ENCODE measurements at regions of chr1 and their contacts with region 1.

Region 1: DNA sequence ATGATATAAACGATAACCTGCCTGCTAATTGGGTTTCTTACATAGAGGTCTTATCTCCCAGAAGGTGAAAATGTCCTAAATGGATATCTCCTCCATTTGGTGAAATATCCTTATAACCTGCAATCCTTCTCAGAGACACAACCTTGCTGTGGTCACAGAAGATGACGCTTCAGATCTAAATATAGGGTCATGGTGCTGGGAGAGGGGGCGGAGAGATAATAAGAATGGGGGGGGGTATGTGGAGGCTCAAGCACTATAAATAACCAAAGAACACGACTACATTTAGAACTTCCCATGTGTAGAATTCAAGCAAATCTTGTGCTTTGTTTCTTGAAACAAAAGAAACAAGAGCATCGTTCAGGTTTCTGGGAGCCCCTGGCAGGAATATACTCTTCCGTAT is 260.6 kb upstream of the ESRRG start:
- DNase-seq: no peak
- ATAC-seq: no peak
- H3K4me3 ChIP-seq: no peak overlapping the region
- H3K27ac ChIP-seq: no peak overlapping the region
- H3K4me1 ChIP-seq: no peaks in the 10 kb centered on the region
- H3K27me3 ChIP-seq: no peaks in the 10 kb centered on the region
- CTCF ChIP-seq: no peak
- POLR2A ChIP-seq: no peak
- RAD21 ChIP-seq: no peak

Region 2: DNA sequence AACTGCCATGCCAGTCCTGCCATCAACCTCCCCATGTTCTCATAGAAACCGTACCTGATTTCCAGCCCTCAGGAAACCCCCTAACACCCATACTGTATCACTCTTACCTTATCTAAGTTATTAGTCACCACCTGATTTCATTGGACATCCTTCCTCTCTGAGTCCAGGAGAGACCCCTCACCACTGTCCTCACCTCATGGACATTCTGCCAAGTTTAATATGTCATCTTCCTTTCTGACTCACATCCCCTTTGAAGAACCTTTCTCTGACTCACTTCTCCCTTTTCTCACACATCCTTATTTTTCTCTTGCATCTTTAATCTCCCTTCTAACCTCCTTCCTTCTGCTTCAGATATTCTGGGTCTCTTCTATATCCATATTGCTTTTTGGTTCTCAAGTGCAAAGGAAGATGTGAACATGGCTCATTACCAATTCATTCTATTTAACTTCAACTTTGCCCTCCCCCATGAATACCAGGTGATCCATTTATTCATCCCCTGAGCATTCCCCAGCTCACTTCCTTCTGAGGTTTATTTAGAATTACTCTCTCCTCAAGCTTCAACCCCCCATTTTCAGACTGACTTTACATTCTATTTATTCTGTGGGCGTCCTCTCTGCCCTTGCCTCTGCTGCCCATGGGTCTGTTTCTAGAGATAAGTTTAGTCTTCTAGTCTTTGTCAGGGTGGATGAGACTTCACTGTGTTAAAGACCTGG is 53.8 kb before region 1 on chr1:
- CTCF ChIA-PET with region 1: no interaction called
- POLR2A ChIA-PET with region 1: no interaction called
- dilution Hi-C with region 1: no loop called
- in situ Hi-C with region 1: no loop called
- intact Hi-C with region 1: no loop called
- DNase-seq: peak; percentile 84
- ATAC-seq: no peak
- H3K4me3 ChIP-seq: no peak overlapping the region
- H3K27ac ChIP-seq: no peak overlapping the region
- H3K4me1 ChIP-seq: no peaks in the 10 kb centered on the region; the same call in 1 of the 2 replicates
- H3K27me3 ChIP-seq: no peaks in the 10 kb centered on the region
- CTCF ChIP-seq: no peak
- POLR2A ChIP-seq: no peak
- RAD21 ChIP-seq: no peak

Region 3: GRCh38 chr1:216961516-216961915 is 22.3 kb before region 1 on chr1:
- CTCF ChIA-PET with region 1: no interaction called
- POLR2A ChIA-PET with region 1: interaction called, 18 read pairs
- dilution Hi-C with region 1: no loop called
- in situ Hi-C with region 1: no loop called
- intact Hi-C with region 1: no loop called
- DNase-seq: no peak
- ATAC-seq: no peak
- H3K4me3 ChIP-seq: no peak overlapping the region
- H3K27ac ChIP-seq: no peak overlapping the region
- H3K4me1 ChIP-seq: no peaks in the 10 kb centered on the region
- H3K27me3 ChIP-seq: no peaks in the 10 kb centered on the region
- CTCF ChIP-seq: no peak
- POLR2A ChIP-seq: no peak
- RAD21 ChIP-seq: no peak